Transverse colon (tissue), 4 donors: ENCODE measurements at regions of chr2 and their contacts with region 1.

Region 1: DNA sequence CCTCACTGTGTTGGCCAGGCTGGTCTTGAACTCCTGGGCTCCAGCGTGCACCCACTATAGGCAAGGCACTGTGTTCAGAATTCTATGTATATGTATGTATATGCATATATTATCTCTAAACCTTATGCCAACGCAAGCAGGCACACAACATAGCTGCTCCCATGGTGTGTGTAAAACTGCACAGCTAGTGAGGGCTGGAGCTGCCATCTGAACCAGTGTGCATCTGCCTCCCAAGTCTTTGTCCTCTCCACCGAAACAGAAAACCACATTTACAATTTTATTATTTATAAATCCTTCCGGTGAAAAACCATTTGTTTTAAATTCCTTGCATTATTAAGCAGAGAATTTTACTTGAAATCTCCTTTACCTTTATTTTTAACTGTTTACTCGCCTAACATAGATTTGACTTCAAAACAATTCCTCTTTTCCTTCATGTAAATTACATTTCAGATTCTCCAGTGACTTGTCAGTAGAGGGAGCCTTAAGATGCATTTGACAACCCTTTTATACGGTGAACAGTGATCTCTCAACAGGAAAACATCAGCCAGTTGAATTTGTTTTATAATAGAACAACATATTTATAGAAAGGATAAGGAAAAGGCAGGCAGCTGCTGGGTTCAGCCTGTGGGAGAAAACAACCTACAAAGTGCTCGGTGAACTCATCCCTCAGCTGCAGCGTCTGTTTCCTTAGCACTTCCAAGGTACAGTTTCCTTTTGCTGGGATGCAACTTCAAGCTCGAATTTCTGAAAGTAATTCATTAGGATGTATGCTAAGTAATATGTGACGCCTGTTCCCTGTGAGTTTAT is 101.2 kb downstream of the MYT1L start:
- DNase-seq: no peak
- H3K4me3 ChIP-seq: no peak overlapping the region
- H3K27ac ChIP-seq: no peak overlapping the region
- H3K4me1 ChIP-seq: no peaks in the 10 kb centered on the region
- H3K27me3 ChIP-seq: no peaks in the 10 kb centered on the region
- CTCF ChIP-seq: no peak
- EP300 ChIP-seq: no peak
- POLR2A ChIP-seq: no peak

Region 2: GRCh38 chr2:2448179-2448578 is 218.3 kb after region 1 on chr2:
- in situ Hi-C with region 1: no loop called
- intact Hi-C with region 1: loop called (anchors 2 kb)
- DNase-seq: no peak
- H3K4me3 ChIP-seq: no peak overlapping the region
- H3K27ac ChIP-seq: no peak overlapping the region
- H3K4me1 ChIP-seq: no peaks in the 10 kb centered on the region
- H3K27me3 ChIP-seq: no peaks in the 10 kb centered on the region
- CTCF ChIP-seq: no peak
- EP300 ChIP-seq: no peak
- POLR2A ChIP-seq: no peak

Region 3: DNA sequence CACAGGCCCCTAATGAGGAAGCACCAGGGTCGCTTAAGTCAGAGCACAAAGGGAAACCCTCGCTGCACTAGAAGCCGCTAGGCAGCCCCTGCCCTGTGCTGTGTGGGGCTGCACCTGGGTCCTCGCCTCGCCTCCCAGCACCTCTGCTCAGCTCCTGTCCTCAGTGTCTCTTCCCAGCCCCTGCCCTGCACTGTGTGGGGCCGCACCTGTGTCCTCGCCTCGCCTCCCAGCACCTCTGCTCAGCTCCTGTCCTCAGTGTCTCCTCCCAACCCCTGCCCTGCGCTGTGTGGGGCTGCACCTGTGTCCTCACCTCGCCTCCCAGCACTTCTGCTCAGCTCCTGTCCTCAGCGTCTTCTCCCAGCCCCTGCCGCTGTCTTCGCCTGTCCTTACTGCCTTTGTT is 805.0 kb after region 1 on chr2:
- in situ Hi-C with region 1: no loop called
- intact Hi-C with region 1: loop called (anchors 5 kb)
- DNase-seq: no peak
- H3K4me3 ChIP-seq: no peak overlapping the region
- H3K27ac ChIP-seq: no peak overlapping the region
- H3K4me1 ChIP-seq: no peaks in the 10 kb centered on the region
- H3K27me3 ChIP-seq: no peaks in the 10 kb centered on the region
- CTCF ChIP-seq: no peak
- EP300 ChIP-seq: no peak
- POLR2A ChIP-seq: no peak